ENCODE measurements at regions of chr6 and their contacts with region 1.

Region 1: GRCh38 chr6:36851149-36851614 is 11.9 kb upstream of the CPNE5 start:
- DNase-seq: peak; percentile 70
- CTCF ChIP-seq: peak; percentile 76

Region 2: GRCh38 chr6:36765594-36766398 is 85.4 kb before region 1 on chr6:
- CTCF ChIA-PET with region 1: interaction called, 75 read pairs
- POLR2A ChIA-PET with region 1: no interaction called
- DNase-seq: peak; percentile 90
- CTCF ChIP-seq: peak; percentile 98

Region 3: GRCh38 chr6:36780442-36781177 is 70.6 kb before region 1 on chr6:
- CTCF ChIA-PET with region 1: interaction called, 16 read pairs
- POLR2A ChIA-PET with region 1: no interaction called
- DNase-seq: no peak
- CTCF ChIP-seq: no peak

Region 4: GRCh38 chr6:36809941-36810803 is 41.0 kb before region 1 on chr6:
- CTCF ChIA-PET with region 1: interaction called, 13 read pairs
- POLR2A ChIA-PET with region 1: no interaction called
- DNase-seq: no peak
- CTCF ChIP-seq: no peak

Region 5: GRCh38 chr6:36836111-36837021 is 14.8 kb before region 1 on chr6:
- CTCF ChIA-PET with region 1: interaction called, 12 read pairs
- POLR2A ChIA-PET with region 1: no interaction called
- DNase-seq: no peak
- CTCF ChIP-seq: no peak

Region 6: GRCh38 chr6:36874443-36875249 is 23.5 kb after region 1 on chr6 and contains the start of gene PPIL1:
- CTCF ChIA-PET with region 1: interaction called, 37 read pairs
- POLR2A ChIA-PET with region 1: no interaction called
- DNase-seq: peak; percentile 89
- CTCF ChIP-seq: no peak

Region 7: GRCh38 chr6:36885461-36886401 is 34.5 kb after region 1 on chr6 and contains the start of gene C6orf89:
- CTCF ChIA-PET with region 1: interaction called, 13 read pairs
- POLR2A ChIA-PET with region 1: no interaction called
- DNase-seq: peak; percentile 94
- CTCF ChIP-seq: peak; percentile 68

Region 8: GRCh38 chr6:37222125-37222967 is 371.2 kb after region 1 on chr6:
- CTCF ChIA-PET with region 1: no interaction called
- POLR2A ChIA-PET with region 1: no interaction called
- DNase-seq: peak; percentile 89
- CTCF ChIP-seq: no peak

Measured in GM10248 (cell line).